ENCODE measurements at regions of chr13 and their contacts with region 1.

Region 1: DNA sequence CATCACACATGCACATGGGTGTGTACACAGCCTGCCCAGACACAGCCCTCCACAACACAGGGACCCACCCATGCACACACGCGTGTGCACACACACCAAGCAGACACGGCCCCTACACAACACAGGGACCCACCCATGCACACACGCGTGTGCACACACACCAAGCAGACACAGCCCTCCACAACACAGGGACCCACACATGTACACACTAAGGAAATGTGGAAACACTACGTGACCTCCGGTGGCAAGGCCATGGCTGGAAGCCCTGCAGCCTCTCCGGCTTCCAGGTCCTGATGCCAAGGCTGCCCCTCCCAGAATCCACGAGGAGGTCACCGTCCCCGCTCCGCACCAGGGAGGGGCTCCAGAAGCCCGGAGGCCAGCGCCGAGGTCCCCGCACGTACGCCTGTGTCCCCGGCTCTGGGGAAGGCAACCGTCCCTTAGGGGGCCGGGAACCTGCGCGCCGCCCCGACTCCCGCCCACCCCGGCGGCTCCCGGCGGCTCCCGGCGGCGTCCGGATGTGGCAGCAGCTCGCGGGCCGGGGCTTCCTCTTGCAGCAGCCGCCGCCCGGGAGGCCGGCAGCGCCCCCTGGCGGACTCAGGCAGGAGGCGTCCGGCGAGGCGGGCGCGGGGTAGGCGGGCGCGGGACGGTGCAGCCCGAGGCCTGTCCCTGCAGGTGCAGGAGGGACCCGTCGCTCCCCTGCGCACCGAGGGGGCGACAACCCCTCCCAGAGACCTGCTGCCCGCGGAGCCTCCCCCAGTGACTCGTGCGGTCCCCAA is 29.8 kb upstream of the GRTP1 start:
- DNase-seq: peak; percentile 71 to 85 (median 81)
- H3K4me3 ChIP-seq: peak overlapping the region; percentile 53
- H3K27ac ChIP-seq: no peak overlapping the region
- H3K4me1 ChIP-seq: peaks cover 6% of the 10 kb centered on the region
- H3K27me3 ChIP-seq: no peaks in the 10 kb centered on the region
- CTCF ChIP-seq: peak; percentile 88 to 89 (median 88)
- EP300 ChIP-seq: no peak
- POLR2A ChIP-seq: no peak

Region 2: GRCh38 chr13:112931028-112931934 is 462.5 kb before region 1 on chr13:
- intact Hi-C with region 1: loop called in 1 of 4 experiments (anchors 10 kb)
- DNase-seq: peak in 1 of 5 donors; percentile 16
- H3K4me3 ChIP-seq: no peak overlapping the region
- H3K27ac ChIP-seq: no peak overlapping the region
- H3K4me1 ChIP-seq: no peaks in the 10 kb centered on the region
- H3K27me3 ChIP-seq: no peaks in the 10 kb centered on the region
- CTCF ChIP-seq: no peak
- EP300 ChIP-seq: no peak
- POLR2A ChIP-seq: no peak

Region 3: DNA sequence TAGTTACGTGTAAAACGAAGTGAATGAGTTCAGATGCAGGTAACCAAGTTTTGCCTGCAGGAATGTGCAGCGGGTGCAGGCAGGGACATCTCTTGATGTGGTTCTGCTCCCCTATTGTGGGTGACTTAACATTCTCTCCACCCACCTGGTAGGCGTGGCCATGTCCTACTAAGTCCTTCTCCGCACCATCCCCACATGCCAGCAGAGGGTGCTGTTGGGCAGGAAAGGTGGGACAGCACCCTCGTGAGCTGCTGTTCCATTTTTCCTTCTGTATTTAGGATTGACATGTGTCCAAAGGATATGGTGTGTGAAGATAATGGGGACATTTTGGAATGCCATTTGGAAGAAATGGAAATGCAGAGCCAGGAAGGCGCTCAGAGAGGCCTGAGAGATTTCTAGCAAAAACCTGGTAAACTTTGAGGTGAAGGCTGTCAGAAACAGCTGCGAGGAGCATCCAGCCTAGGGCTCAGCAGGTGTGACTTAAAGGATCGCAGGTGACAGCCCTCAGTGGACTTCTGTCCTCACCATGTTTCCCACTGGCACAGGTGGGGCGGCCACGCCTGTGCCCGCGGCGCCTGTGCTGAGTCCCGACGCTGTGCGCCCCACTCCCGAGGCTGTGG is 451.0 kb before region 1 on chr13:
- intact Hi-C with region 1: loop called in 2 of 4 experiments (anchors 5 to 10 kb)
- DNase-seq: peak; percentile 92 to 97 (median 96)
- H3K4me3 ChIP-seq: peak overlapping the region; percentile 42
- H3K27ac ChIP-seq: no peak overlapping the region
- H3K4me1 ChIP-seq: peaks cover 5% of the 10 kb centered on the region
- H3K27me3 ChIP-seq: no peaks in the 10 kb centered on the region
- CTCF ChIP-seq: peak; percentile 73 to 92 (median 78)
- EP300 ChIP-seq: no peak
- POLR2A ChIP-seq: no peak

Region 4: DNA sequence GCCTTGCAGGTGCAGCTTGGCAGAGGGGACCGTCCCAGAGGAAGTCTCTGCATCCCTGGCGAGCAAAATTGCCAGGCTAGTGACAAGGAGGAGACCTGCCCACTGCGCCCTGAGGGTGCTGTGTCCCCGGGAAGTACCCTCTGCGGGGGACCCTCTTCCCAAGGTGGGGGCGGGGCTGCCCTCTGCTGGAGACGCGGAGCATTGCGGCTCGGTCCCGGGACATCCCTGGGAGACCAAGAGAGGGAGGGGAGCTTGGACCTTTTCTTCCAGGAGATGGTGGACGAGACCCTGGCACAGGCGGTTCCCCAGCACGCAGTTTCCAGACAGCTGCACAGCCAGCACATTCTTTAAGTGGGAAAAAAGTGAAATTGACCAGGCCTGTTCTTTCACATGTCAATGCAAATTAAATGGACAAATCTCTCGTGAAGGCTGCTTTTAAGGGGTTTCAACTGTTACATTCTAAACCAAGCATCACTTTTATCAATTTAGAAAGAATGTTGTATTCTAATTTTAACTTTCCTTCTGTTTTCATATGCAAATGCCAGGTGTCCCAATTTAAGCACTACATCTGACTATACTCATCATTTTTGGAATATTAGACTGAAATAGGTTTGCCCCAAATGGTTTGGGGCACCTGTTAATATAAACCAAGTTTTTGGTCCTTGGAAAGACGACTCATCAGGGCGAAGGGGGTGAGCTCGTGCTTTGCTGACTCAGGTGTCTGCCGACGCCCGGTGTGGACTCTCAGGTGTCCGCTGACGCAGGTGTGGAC is 364.1 kb before region 1 on chr13:
- intact Hi-C with region 1: loop called in 1 of 4 experiments (anchors 10 kb)
- DNase-seq: peak in 4 of 5 donors; percentile 40 to 73 (median 64)
- H3K4me3 ChIP-seq: no peak overlapping the region
- H3K27ac ChIP-seq: no peak overlapping the region
- H3K4me1 ChIP-seq: no peaks in the 10 kb centered on the region
- H3K27me3 ChIP-seq: no peaks in the 10 kb centered on the region
- CTCF ChIP-seq: peak; percentile 45 to 66 (median 59)
- EP300 ChIP-seq: no peak
- POLR2A ChIP-seq: no peak

Region 5: DNA sequence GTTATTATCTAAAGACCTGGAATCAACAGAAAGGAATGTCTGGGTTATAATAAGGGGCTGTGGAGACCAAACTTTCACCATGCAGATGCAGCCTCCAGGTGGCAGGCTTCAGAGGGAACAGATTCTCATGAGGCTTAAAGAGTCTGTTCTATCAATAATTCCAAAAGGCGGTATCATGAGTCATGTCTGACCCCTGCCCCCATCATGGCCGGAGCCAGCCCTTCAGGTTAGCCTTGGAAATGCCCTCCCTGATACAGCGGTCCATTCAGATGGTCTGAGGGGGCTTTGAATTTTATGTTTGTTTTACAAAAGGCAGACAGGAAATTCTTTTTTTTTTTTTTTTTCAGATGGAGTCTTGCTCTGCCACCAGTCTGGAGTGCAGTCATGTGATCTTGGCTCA is 118.4 kb before region 1 on chr13:
- intact Hi-C with region 1: loop called in 3 of 4 experiments (anchors 5 to 10 kb)
- DNase-seq: peak; percentile 14 to 62 (median 41)
- H3K4me3 ChIP-seq: no peak overlapping the region
- H3K27ac ChIP-seq: no peak overlapping the region
- H3K4me1 ChIP-seq: no peaks in the 10 kb centered on the region
- H3K27me3 ChIP-seq: no peaks in the 10 kb centered on the region
- CTCF ChIP-seq: peak in 1 of 3 donors; percentile 27
- EP300 ChIP-seq: no peak
- POLR2A ChIP-seq: no peak

Measured in ovary (tissue), 10 donors.